ENCODE measurements at regions of chr20 and their contacts with region 1.

Region 1: DNA sequence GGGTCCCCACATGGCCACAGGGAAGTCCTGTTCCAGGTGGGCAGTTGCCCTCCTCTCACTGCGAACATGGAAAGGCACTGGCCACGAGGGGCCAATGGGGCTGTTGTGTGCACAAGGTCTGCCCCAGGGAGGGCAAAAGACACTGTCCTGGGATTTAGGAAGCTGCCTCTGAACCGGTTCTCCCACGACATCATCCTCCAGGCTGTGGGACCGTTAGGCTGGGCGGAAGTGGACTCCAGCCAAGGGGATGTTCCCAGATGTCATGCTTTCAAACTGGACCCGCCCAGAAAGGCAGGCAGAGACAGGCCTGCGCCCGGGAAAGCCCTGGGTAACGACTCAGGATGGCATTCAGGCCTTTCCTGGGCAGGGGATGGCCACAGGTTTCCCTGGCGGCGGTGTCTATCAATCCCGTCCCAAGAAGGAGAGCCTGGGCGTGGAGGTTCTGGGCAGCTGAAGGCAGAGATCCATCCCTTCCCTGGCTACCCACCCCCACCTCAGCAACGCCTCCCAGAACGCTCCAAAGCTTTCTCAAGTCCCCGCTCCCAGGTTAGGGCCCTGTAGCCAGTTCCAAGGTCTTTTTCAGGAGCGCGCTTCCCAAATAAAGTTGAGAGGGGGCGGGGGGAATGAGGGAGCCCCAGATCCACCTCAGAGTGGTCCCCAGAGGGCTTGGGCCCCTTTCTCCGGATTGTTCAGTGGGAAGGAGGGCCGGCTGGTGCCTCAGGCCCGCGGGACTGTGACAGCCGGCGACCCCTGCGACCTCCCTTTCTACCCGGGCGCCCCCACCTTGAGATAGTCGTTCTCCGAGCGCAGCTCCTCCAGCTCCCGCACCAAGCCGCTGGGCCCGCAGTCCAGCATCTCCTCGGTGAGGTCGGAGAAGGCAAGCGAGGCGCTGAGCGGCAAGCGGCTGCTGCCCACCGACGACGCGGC is 13.8 kb upstream of the TLDC2 start:
- DNase-seq: peak; percentile 89 to 95 (median 93)
- ATAC-seq: peak; percentile 64 to 67
- H3K4me3 ChIP-seq: peak overlapping the region; percentile 94
- H3K27ac ChIP-seq: peak overlapping the region; percentile 76
- H3K4me1 ChIP-seq: peaks cover 10% of the 10 kb centered on the region
- H3K27me3 ChIP-seq: no peaks in the 10 kb centered on the region

Region 2: GRCh38 chr20:36339646-36340472 is 522.3 kb before region 1 on chr20:
- intact Hi-C with region 1: no loop called
- DNase-seq: peak in 1 of 3 donors; percentile 12
- ATAC-seq: no peak
- H3K4me3 ChIP-seq: no peak overlapping the region
- H3K27ac ChIP-seq: no peak overlapping the region
- H3K4me1 ChIP-seq: no peaks in the 10 kb centered on the region
- H3K27me3 ChIP-seq: no peaks in the 10 kb centered on the region

Region 3: GRCh38 chr20:36773597-36774390 is 88.3 kb before region 1 on chr20 and contains the start of gene DSN1:
- intact Hi-C with region 1: loop called in 1 of 4 experiments (anchors 2 kb)
- DNase-seq: peak; percentile 97 to 100 (median 100)
- ATAC-seq: peak; percentile 96
- H3K4me3 ChIP-seq: peak within 1 kb of the TSS; percentile 59
- H3K27ac ChIP-seq: peak within 1 kb of the TSS; percentile 86
- H3K4me1 ChIP-seq: peaks cover 5% of the 10 kb centered on the region
- H3K27me3 ChIP-seq: no peaks in the 10 kb centered on the region
- total RNA-seq, gene DSN1: 4.9 to 7.5 (median 5.7) TPM

Region 4: GRCh38 chr20:36819659-36820058 is 42.5 kb before region 1 on chr20:
- intact Hi-C with region 1: loop called in 2 of 4 experiments (anchors 5 to 10 kb)
- DNase-seq: no peak
- ATAC-seq: peak in 1 of 2 donors; percentile 30
- H3K4me3 ChIP-seq: no peak overlapping the region
- H3K27ac ChIP-seq: no peak overlapping the region
- H3K4me1 ChIP-seq: peaks cover 11% of the 10 kb centered on the region
- H3K27me3 ChIP-seq: no peaks in the 10 kb centered on the region

Measured in right cardiac atrium (tissue), 5 donors.